Tibial artery (tissue), 4 donors: ENCODE measurements at regions of chr9 and their contacts with region 1.

Region 1: DNA sequence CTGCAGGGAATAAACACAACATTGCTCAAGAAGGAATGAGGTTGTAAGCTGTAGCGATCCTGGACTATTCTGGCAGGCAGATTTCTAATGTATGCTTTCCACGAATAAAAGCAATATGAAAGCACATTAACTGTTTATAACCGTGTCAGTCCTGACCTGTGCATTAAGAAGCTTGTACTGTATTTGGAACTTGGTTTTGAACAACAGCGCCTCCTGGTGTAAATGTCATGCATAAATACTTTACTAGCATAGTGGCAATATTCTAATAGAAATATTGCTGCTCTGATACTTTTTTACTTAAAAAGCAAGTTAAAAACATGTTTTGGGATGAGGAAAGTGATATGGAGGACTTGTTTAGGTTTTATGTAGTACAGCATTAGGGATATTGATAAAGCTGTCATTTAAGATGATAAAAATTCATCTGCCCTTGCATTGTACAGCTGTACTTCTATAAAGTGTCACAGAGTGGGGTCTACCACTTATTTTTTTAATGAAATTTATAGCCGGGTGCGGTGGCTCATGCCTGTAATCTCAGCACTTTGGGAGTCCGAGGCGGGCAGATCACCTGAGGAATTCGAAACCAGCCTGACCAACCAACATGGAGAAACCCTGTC is 70.7 kb upstream of the GNE start:
- DNase-seq: no peak
- H3K4me3 ChIP-seq: no peak overlapping the region
- H3K27ac ChIP-seq: no peak overlapping the region
- H3K4me1 ChIP-seq: peaks cover 0 to 5% (median 2%) of the 10 kb centered on the region in 4 donors
- H3K27me3 ChIP-seq: no peaks in the 10 kb centered on the region
- CTCF ChIP-seq: peak; percentile 74 to 87

Region 2: DNA sequence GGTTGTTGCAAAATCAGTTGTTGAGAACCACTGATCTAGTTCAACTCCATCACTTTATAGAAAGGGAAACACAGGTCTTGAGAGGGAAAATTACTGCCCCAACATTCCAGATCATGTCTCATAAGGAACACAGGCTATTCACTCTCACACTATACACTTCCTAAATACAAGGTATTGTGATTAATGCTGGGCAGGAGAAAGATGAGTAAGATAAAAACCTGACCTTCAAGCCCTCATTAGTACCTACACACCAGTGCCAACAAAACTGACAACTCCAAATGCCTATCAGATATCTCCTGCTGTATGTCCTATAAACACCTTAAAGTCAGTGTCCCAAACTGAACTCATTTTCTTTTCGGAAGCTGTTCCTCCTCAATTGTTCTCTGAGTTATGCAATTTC is 78.8 kb before region 1 on chr9:
- intact Hi-C with region 1: loop called (anchors 5 kb)
- DNase-seq: no peak
- H3K4me3 ChIP-seq: no peak overlapping the region
- H3K27ac ChIP-seq: no peak overlapping the region
- H3K4me1 ChIP-seq: peaks cover 0 to 29% (median 0%) of the 10 kb centered on the region in 4 donors
- H3K27me3 ChIP-seq: no peaks in the 10 kb centered on the region
- CTCF ChIP-seq: no peak